ENCODE measurements at regions of chr15 and their contacts with region 1.

Region 1: DNA sequence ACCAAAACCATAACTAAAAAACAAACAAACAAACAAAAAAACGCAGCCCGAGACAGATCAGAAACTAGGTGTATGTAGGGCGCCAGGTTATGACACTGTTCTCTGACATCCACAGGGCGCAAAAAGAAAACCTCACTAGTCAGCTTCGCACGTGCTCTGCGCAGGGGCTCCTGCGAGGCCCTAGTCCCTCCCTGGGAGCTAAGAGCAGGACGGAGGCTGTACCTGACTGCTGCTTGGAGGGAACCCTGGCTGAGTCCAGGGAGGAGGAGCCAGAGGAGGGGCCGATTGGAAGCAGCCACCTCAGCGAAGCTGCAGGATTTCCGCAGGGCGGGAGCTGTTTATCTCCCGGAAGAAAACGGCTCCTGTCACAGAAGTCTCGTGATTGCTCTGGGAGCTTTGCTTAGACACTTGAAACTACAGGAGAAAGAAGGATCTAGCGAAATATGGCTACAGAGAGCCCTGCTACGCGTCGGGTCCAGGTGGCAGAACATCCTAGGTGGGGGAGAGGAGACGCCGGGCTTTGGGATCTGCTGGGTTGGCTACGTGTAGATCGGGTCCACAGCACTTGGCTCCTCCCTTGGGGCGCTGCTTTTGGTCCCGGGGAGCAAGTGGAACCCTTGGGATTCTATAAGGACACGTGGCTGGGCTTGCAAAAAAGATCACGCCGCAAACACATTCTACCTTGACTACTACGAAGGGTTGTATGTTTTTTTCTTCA is at the start of gene GALK2:
- DNase-seq: peak; percentile 84 to 98 (median 88)
- ATAC-seq: peak; percentile 94
- H3K4me3 ChIP-seq: peak within 1 kb of the TSS; percentile 56
- H3K27ac ChIP-seq: peak within 1 kb of the TSS; percentile 91
- H3K4me1 ChIP-seq: peaks cover 0 to 9% of the 10 kb centered on the region in 2 experiments; a peak in 4 of 5 replicates
- H3K27me3 ChIP-seq: no peaks in the 10 kb centered on the region
- CTCF ChIP-seq: no peak
- EP300 ChIP-seq: peak; percentile 50
- POLR2A ChIP-seq: peak; percentile 93
- RAD21 ChIP-seq: no peak
- polyA plus RNA-seq, gene GALK2: 81.6 to 82.0 TPM

Region 2: DNA sequence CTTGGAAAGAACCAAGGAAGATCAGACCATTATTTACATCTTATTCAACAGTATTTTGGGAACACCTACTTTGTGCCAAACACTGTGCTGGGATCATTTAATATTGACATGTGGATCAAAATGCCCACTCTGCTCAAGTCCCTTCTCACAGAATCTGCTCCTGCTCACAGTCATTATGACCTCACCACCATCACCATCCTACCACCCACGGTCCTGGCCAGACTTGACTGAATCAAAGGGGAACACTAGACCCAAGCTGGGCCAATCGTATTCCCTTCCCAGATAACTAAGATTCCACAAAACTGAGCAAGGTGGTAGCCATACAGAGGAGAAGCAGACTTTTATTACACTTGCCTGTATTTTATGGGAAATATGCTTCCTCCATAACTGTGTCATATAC is 355.8 kb before region 1 on chr15:
- CTCF ChIA-PET with region 1: no interaction called
- POLR2A ChIA-PET with region 1: no interaction called
- in situ Hi-C with region 1: no loop called
- intact Hi-C with region 1: no loop called
- DNase-seq: no peak
- ATAC-seq: no peak
- H3K4me3 ChIP-seq: no peak overlapping the region
- H3K27ac ChIP-seq: no peak overlapping the region
- H3K4me1 ChIP-seq: peaks cover 5% of the 10 kb centered on the region in 2 experiments; a peak in 3 of 5 replicates
- H3K27me3 ChIP-seq: no peaks in the 10 kb centered on the region
- CTCF ChIP-seq: no peak
- EP300 ChIP-seq: no peak
- POLR2A ChIP-seq: no peak
- RAD21 ChIP-seq: no peak

Region 3: DNA sequence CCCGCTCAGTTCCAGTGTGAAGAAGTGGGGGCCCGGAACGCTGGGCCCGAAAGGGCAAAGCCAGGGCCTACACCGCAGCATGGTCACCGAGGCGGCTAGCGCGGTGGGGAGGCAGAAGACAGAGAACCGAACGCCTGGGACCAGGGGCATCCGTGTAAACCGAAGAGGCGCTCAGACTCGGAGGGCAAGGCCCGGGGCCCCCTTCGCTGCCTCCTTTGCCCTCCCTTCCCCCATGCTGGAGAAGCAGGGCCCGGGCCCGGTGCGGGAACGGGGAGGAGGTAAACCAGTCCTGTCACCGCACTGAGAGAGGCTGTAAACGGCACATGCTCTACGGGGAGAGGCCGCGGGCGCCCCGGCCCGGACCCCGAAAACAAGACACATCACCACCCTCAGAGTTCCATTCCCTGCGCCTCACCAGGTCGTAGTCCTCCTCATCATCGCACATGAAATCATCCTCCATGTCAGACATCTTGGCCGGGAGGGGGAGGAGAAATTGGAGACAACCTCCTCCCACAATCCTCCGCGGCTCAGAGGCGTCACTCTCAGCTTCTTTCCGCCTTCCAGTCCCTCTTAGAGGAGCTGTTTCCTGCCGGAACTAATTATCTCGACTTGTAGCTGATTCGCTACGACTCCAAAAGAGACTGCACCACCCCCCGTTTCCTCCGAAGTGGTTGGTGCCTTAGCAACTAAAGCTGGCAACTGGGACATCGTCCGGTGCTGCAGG is 14.8 kb before region 1 on chr15 and contains the start of gene COPS2:
- CTCF ChIA-PET with region 1: no interaction called
- POLR2A ChIA-PET with region 1: interaction called, 32 read pairs
- in situ Hi-C with region 1: no loop called
- intact Hi-C with region 1: loop called (anchors 1 kb)
- DNase-seq: peak; percentile 79 to 97 (median 84)
- ATAC-seq: peak; percentile 91
- H3K4me3 ChIP-seq: peak within 1 kb of the TSS; percentile 89
- H3K27ac ChIP-seq: peak within 1 kb of the TSS; percentile 95
- H3K4me1 ChIP-seq: peaks cover 0 to 5% of the 10 kb centered on the region in 2 experiments; a peak in 2 of 5 replicates
- H3K27me3 ChIP-seq: no peaks in the 10 kb centered on the region
- CTCF ChIP-seq: 0 out of 6 replicates have a peak, but pooled peaks of 1 of the 3 experiments have one; percentile 13
- EP300 ChIP-seq: peak; percentile 68
- POLR2A ChIP-seq: peak; percentile 89
- RAD21 ChIP-seq: no peak
- polyA plus RNA-seq, gene COPS2: 105 to 117 TPM

Region 4: DNA sequence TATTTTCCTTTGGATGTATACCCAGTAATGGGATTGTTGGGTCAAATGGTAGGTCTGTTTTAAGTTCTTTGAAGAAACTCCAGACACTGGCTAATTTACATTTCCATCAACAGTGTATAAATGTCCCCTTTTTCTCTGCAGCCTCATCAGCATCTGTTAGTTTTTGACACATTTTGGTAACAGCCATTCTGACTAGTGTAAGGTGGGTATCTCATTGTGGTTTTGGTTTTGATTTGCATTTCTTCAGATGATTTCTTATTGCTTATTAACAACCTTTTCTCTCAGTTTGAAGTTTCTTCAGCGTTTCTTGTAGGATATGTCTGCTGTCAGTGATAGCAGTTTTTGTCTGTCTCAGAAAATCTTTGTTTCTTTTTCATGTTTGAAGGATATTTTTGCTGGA is 15.4 kb after region 1 on chr15:
- CTCF ChIA-PET with region 1: no interaction called
- POLR2A ChIA-PET with region 1: interaction called, 12 read pairs
- in situ Hi-C with region 1: no loop called
- intact Hi-C with region 1: no loop called
- DNase-seq: no peak
- ATAC-seq: no peak
- H3K4me3 ChIP-seq: no peak overlapping the region
- H3K27ac ChIP-seq: no peak overlapping the region
- H3K4me1 ChIP-seq: peaks cover 0 to 5% of the 10 kb centered on the region in 2 experiments; a peak in 2 of 5 replicates
- H3K27me3 ChIP-seq: no peaks in the 10 kb centered on the region
- CTCF ChIP-seq: no peak
- EP300 ChIP-seq: no peak
- POLR2A ChIP-seq: no peak
- RAD21 ChIP-seq: no peak

Region 5: DNA sequence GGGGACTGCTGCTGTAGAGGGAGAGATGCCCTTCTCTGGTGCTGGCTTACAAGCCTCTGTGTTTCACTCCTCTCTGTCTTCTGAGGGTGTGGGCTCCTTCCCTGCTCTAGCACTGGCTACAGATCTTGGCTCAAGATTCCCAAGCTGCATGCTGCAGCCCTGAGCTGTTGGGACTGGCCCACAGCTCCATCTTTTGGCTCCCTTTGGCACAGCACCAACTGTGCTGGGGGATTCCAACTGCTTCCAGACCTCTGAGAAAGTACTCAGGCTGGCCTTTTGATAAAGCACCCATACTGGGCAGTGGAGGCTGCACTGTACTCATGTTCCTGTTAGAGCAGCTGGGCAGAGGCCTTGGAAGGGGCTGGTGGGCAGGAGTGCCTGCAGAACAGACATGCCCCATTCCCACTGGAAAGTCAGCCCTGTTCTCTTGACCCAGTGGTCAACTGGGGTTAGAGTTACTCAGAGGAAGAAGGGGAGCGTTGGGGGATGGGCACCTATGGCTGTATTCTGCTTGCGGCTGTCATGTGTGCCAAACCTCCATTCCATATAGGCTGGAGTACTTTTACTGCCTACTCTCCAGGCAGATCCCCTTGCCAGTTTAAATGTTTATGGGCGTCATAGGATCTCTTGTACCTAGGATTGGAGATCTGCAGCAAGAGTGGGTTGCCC is 55.7 kb after region 1 on chr15:
- CTCF ChIA-PET with region 1: no interaction called
- POLR2A ChIA-PET with region 1: interaction called, 3 read pairs
- in situ Hi-C with region 1: no loop called
- intact Hi-C with region 1: loop called (anchors 1 kb)
- DNase-seq: peak; percentile 14 to 87 (median 48)
- ATAC-seq: peak; percentile 98
- H3K4me3 ChIP-seq: no peak overlapping the region; the same call in 1 of the 2 replicates
- H3K27ac ChIP-seq: peak overlapping the region; percentile 60
- H3K4me1 ChIP-seq: peaks cover 7 to 11% of the 10 kb centered on the region in 2 experiments; a peak in 4 of 5 replicates
- H3K27me3 ChIP-seq: no peaks in the 10 kb centered on the region
- CTCF ChIP-seq: peak; percentile 68 to 83 (median 79)
- EP300 ChIP-seq: no peak
- POLR2A ChIP-seq: no peak
- RAD21 ChIP-seq: peak; percentile 59 to 81

Region 6: GRCh38 chr15:49610161-49610918 is 440.3 kb after region 1 on chr15:
- CTCF ChIA-PET with region 1: no interaction called
- POLR2A ChIA-PET with region 1: no interaction called
- in situ Hi-C with region 1: no loop called
- intact Hi-C with region 1: loop called (anchors 10 kb)
- DNase-seq: no peak
- ATAC-seq: no peak
- H3K4me3 ChIP-seq: no peak overlapping the region
- H3K27ac ChIP-seq: no peak overlapping the region
- H3K4me1 ChIP-seq: no peaks in the 10 kb centered on the region
- H3K27me3 ChIP-seq: no peaks in the 10 kb centered on the region
- CTCF ChIP-seq: no peak
- EP300 ChIP-seq: no peak
- POLR2A ChIP-seq: no peak
- RAD21 ChIP-seq: no peak

Measured in K562 (cell line).